ENCODE measurements at regions of chr13 and their contacts with region 1.

Region 1: GRCh38 chr13:102399791-102400674 is 1.8 kb downstream of the FGF14 start:
- DNase-seq: peak in 1 of 2 experiments; percentile 72
- H3K4me3 ChIP-seq: peak overlapping the region; percentile 38 to 76 (median 60)
- H3K27ac ChIP-seq: no peak overlapping the region
- H3K4me1 ChIP-seq: peaks cover 2 to 4% (median 3%) of the 10 kb centered on the region in 4 experiments; a peak in 4 of 7 replicates
- H3K27me3 ChIP-seq: peaks cover 8 to 32% (median 23%) of the 10 kb centered on the region in 4 experiments
- CTCF ChIP-seq: peak in 2 of 3 experiments; percentile 0 to 1; a peak in 1 of 4 replicates
- EP300 ChIP-seq: no peak
- POLR2A ChIP-seq: no peak
- RAD21 ChIP-seq: peak; percentile 14 to 25; a peak in 2 of 4 replicates

Region 2: DNA sequence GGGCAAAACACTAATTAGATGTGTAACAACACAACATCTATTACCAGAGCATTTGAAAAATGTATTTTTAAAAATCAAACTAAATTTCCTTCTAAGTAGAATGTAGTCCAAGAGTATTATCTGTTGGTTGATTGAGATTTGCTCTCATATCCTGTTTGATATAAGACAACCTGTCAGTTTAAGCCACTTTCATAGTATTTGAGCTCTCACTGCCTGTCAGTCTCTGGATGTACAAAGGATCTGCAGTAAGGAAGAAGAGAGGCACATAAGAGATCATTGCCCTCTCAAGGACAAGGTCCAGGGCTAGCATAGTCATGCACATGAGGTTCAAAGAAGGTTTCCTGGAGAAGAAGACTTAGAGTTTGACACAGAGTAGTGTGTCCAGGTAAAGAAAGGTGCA is 55.6 kb before region 1 on chr13:
- CTCF ChIA-PET with region 1: no interaction called
- POLR2A ChIA-PET with region 1: no interaction called
- DNase-seq: no peak
- H3K4me3 ChIP-seq: no peak overlapping the region
- H3K27ac ChIP-seq: no peak overlapping the region
- H3K4me1 ChIP-seq: peaks cover 0 to 3% (median 0%) of the 10 kb centered on the region in 4 experiments; a peak in 1 of 7 replicates
- H3K27me3 ChIP-seq: peaks cover 0 to 1% (median 0%) of the 10 kb centered on the region in 4 experiments; a peak in 1 of 7 replicates
- CTCF ChIP-seq: no peak
- EP300 ChIP-seq: no peak
- POLR2A ChIP-seq: no peak
- RAD21 ChIP-seq: no peak

Region 3: GRCh38 chr13:102460801-102461200 is 60.8 kb after region 1 on chr13:
- CTCF ChIA-PET with region 1: interaction called, 12 read pairs
- POLR2A ChIA-PET with region 1: no interaction called
- DNase-seq: no peak
- H3K4me3 ChIP-seq: no peak overlapping the region
- H3K27ac ChIP-seq: no peak overlapping the region
- H3K4me1 ChIP-seq: no peaks in the 10 kb centered on the region
- H3K27me3 ChIP-seq: no peaks in the 10 kb centered on the region
- CTCF ChIP-seq: no peak
- EP300 ChIP-seq: no peak
- POLR2A ChIP-seq: no peak
- RAD21 ChIP-seq: no peak

Region 4: GRCh38 chr13:102854675-102855074 is 454.6 kb after region 1 on chr13:
- CTCF ChIA-PET with region 1: no interaction called
- POLR2A ChIA-PET with region 1: no interaction called
- DNase-seq: no peak
- H3K4me3 ChIP-seq: no peak overlapping the region
- H3K27ac ChIP-seq: no peak overlapping the region
- H3K4me1 ChIP-seq: no peaks in the 10 kb centered on the region
- H3K27me3 ChIP-seq: no peaks in the 10 kb centered on the region
- CTCF ChIP-seq: no peak
- EP300 ChIP-seq: no peak
- POLR2A ChIP-seq: no peak
- RAD21 ChIP-seq: no peak